ENCODE measurements at regions of chr6 and their contacts with region 1.

Region 1: DNA sequence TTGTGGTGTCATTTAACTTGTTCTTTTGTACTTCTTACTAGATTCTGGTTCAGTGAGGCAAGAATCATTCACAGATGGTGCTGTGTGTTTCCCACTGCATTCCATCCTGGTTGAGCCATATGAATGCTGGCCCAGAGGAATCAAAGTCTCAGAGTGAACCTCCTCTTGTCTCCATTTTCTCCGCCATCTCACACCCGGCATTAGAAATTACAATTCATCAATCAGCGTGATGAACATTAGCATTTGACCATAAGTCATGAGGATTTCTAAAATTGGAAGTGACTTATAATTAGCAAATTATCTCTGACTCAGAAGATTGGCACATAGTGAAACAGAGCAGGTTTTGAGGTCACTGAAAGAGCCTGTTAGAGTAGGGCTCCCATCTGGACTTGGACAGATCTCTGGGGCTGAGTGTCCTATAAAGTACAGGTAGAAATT is 25.2 kb downstream of the TNFAIP3 start:
- DNase-seq: no peak
- ATAC-seq: no peak

Region 2: DNA sequence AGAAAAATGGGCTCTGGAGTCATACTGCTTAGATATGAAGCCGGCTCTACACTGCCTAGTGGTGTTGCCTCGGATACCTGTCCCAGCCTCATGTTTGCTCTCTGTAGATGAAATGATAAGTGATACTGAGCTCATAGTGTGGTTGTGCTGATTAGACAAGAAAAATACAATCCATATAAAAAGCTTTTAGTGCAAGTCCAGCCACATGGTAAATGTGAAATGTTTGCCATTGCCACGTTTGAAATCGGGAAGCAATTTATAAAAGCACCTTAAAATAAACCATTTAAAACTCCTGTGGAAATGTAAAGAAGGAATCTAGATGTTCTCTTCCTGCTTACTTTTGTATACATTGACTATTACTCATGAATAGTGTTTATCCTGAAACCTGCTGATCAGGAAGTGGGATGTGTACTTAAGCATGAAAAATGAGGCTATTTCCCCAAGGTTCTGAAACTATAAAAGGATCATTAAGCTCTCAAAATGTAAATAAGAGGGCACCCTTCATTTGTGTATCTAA is 339.1 kb after region 1 on chr6:
- intact Hi-C with region 1: no loop called
- DNase-seq: no peak
- ATAC-seq: no peak

Region 3: DNA sequence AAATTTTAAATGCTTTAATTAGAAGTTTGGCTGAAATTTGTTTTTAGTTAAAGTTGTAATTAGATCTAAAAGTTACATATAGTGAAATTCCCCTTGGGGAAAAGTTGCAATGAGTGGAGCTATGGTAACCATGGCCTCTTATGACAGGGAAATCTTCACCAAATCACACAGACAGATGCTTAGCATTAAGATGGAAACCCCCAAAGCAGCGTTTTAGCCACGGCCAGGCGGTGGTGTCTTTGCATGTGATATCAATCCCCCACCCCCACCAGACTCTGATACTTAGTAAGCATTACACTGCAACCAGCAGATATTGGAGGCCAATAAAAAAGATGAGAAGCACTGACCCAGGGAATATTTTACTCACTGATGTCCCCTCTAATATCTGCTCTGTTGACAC is 1020.0 kb after region 1 on chr6:
- intact Hi-C with region 1: loop called (anchors 10 kb)
- DNase-seq: no peak
- ATAC-seq: no peak